Endothelial cell of umbilical vein (primary cell): ENCODE measurements at regions of chr9 and their contacts with region 1.

Region 1: GRCh38 chr9:15606643-15607472 is 54.0 kb downstream of the CCDC171 start:
- DNase-seq: peak; percentile 70
- H3K4me3 ChIP-seq: no peak overlapping the region
- H3K27ac ChIP-seq: peak overlapping the region; percentile 41
- H3K4me1 ChIP-seq: peaks cover 19% of the 10 kb centered on the region
- H3K27me3 ChIP-seq: no peaks in the 10 kb centered on the region
- CTCF ChIP-seq: peak; percentile 26 to 32
- POLR2A ChIP-seq: no peak

Region 2: DNA sequence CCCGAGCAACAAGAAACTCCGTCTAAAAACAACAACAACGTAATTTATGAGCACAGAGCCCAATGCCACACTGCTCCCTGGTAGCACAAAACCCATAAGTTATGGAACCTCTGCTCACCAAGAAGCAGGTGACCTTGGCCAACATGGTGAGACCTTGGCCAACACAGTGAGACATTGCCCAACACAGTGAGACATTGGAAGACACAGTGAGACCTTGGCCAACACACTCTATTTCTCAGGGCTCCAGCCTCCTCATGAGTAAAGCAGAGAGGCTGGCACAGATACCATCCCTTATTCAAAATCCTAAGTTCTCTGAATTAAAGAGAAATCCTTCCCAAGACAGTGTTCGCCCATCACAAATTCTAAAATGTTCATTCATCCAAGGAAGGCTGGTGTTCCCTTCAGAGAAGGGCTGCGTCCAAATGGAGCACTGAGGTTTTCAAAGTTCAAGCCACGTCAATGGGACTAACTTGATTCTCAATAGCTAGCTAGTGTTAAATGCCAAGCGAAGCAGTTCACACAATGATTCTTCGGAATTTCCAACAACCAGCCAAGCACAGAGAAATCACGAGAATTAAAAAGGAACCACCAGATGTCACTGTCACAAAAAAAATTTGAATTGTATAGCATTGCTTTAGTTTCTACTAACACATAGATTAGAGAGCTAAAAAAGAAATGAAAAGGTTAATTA is 329.3 kb before region 1 on chr9:
- CTCF ChIA-PET with region 1: interaction called, 22 read pairs
- POLR2A ChIA-PET with region 1: no interaction called
- dilution Hi-C with region 1: no loop called
- intact Hi-C with region 1: loop called (anchors 2 kb)
- DNase-seq: peak; percentile 48
- H3K4me3 ChIP-seq: no peak overlapping the region
- H3K27ac ChIP-seq: no peak overlapping the region
- H3K4me1 ChIP-seq: no peaks in the 10 kb centered on the region
- H3K27me3 ChIP-seq: no peaks in the 10 kb centered on the region
- CTCF ChIP-seq: peak in 1 of 2 donors; percentile 19
- POLR2A ChIP-seq: no peak

Region 3: GRCh38 chr9:15485836-15486666 is 120.8 kb before region 1 on chr9:
- CTCF ChIA-PET with region 1: no interaction called
- POLR2A ChIA-PET with region 1: no interaction called
- dilution Hi-C with region 1: no loop called
- intact Hi-C with region 1: loop called (anchors 5 kb)
- DNase-seq: peak; percentile 32
- H3K4me3 ChIP-seq: no peak overlapping the region
- H3K27ac ChIP-seq: no peak overlapping the region
- H3K4me1 ChIP-seq: no peaks in the 10 kb centered on the region
- H3K27me3 ChIP-seq: no peaks in the 10 kb centered on the region
- CTCF ChIP-seq: peak in 1 of 2 donors; percentile 29
- POLR2A ChIP-seq: no peak

Region 4: DNA sequence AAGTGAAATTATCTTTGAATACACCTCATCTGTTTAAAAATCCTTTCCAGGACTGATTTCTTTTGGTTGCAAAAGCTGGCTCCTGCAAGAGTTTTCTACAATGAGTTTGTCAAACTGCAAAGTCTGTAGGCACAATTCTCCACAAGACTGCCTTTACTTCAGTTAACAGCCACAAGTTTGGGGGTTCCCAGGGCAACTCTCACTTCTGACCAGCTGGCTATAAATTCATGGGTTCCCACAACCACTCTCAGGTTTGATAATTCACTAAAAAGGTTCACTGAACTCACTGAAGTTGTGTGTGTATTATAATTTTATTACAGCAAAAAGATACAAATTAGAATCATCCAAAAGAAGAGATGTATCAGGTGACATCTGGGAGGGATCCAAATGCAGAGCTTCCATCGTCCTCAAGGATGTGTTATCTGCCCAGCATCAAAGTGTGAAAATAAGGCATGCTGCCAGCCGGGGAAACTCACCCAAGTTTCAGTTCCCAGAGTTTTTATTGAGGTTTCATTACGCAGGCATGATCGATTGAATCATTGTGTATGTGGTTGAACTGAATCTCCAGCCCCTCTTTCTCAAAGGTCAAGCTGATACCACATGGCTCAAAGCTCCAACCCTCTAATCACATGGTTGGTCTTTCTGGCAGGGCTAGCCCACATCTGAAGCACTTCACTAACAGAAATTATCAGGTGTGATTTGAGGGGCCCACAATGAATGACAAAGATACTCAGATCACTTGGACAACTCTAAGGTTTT is 77.1 kb before region 1 on chr9:
- CTCF ChIA-PET with region 1: interaction called, 13 read pairs
- POLR2A ChIA-PET with region 1: no interaction called
- dilution Hi-C with region 1: no loop called
- intact Hi-C with region 1: no loop called
- DNase-seq: no peak
- H3K4me3 ChIP-seq: no peak overlapping the region
- H3K27ac ChIP-seq: no peak overlapping the region
- H3K4me1 ChIP-seq: peaks cover 9% of the 10 kb centered on the region
- H3K27me3 ChIP-seq: no peaks in the 10 kb centered on the region
- CTCF ChIP-seq: no peak
- POLR2A ChIP-seq: no peak

Region 5: GRCh38 chr9:15622318-15622971 is 15.6 kb after region 1 on chr9:
- CTCF ChIA-PET with region 1: interaction called, 14 read pairs
- POLR2A ChIA-PET with region 1: no interaction called
- dilution Hi-C with region 1: no loop called
- intact Hi-C with region 1: no loop called
- DNase-seq: peak; percentile 36
- H3K4me3 ChIP-seq: no peak overlapping the region
- H3K27ac ChIP-seq: no peak overlapping the region
- H3K4me1 ChIP-seq: no peaks in the 10 kb centered on the region
- H3K27me3 ChIP-seq: no peaks in the 10 kb centered on the region
- CTCF ChIP-seq: peak; percentile 12 to 18
- POLR2A ChIP-seq: no peak

Region 6: GRCh38 chr9:15763371-15763770 is 156.5 kb after region 1 on chr9:
- CTCF ChIA-PET with region 1: no interaction called
- POLR2A ChIA-PET with region 1: no interaction called
- dilution Hi-C with region 1: no loop called
- intact Hi-C with region 1: no loop called
- DNase-seq: no peak
- H3K4me3 ChIP-seq: no peak overlapping the region
- H3K27ac ChIP-seq: no peak overlapping the region
- H3K4me1 ChIP-seq: no peaks in the 10 kb centered on the region
- H3K27me3 ChIP-seq: no peaks in the 10 kb centered on the region
- CTCF ChIP-seq: no peak
- POLR2A ChIP-seq: no peak

Region 7: DNA sequence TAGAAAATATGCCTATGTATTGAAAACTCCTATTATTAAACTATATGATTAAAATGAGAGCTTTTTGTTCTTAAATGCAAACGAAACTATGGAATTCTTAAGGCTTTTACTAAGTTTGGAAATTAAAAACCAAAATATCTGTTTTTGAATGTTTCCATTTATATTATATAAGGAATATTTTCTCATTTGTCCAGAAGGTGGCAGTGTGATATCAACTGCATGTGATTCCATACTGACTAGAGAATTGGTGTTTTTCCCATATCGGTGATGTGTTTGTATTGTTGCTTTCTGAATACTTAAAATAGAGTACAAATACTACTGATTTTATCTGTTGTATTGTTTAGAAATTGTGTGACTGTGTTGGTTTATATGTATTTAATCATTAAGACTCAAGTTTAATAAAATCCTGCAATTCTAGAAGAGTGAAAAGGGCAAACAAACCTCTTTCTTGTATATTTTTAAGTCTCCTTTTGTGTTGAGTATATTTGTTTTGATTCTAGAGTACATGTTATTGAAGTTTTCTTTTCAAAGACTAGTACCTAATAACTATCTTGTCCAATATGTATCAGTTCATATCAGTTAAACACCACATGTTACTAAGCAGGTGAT is 266.8 kb after region 1 on chr9:
- CTCF ChIA-PET with region 1: no interaction called
- POLR2A ChIA-PET with region 1: no interaction called
- dilution Hi-C with region 1: no loop called
- intact Hi-C with region 1: no loop called
- DNase-seq: peak; percentile 55
- H3K4me3 ChIP-seq: no peak overlapping the region
- H3K27ac ChIP-seq: no peak overlapping the region
- H3K4me1 ChIP-seq: no peaks in the 10 kb centered on the region
- H3K27me3 ChIP-seq: no peaks in the 10 kb centered on the region
- CTCF ChIP-seq: peak; percentile 25 to 33
- POLR2A ChIP-seq: no peak